WTC11 (cell line): ENCODE measurements at regions of chr11 and their contacts with region 1.

Region 1: GRCh38 chr11:2002807-2003206 is 5.2 kb upstream of the H19 start:
- DNase-seq: no peak
- ATAC-seq: no peak
- H3K4me3 Mint-ChIP-seq: no peak overlapping the region
- H3K27ac Mint-ChIP-seq: no peak overlapping the region
- H3K4me1 Mint-ChIP-seq: no peaks in the 10 kb centered on the region
- H3K27me3 Mint-ChIP-seq: no peaks in the 10 kb centered on the region
- CTCF ChIP-seq: no peak

Region 2: GRCh38 chr11:1946812-1947484 is 55.9 kb before region 1 on chr11 and contains the start of gene MRPL23:
- CTCF ChIA-PET with region 1: interaction called, 21 read pairs
- POLR2A ChIA-PET with region 1: no interaction called
- DNase-seq: no peak
- ATAC-seq: peak; percentile 27
- H3K4me3 Mint-ChIP-seq: no peak within 1 kb of the TSS
- H3K27ac Mint-ChIP-seq: no peak within 1 kb of the TSS
- H3K4me1 Mint-ChIP-seq: peaks cover 3% of the 10 kb centered on the region
- H3K27me3 Mint-ChIP-seq: no peaks in the 10 kb centered on the region
- CTCF ChIP-seq: no peak
- total RNA-seq, gene MRPL23: 59.4 to 73.0 TPM (median 61.0 TPM) in 3 replicates